PC-9 (cell line): ENCODE measurements at regions of chr9 and their contacts with region 1.

Region 1: GRCh38 chr9:94649100-94649819 is 9.9 kb upstream of the FBP1 start:
- DNase-seq: peak; percentile 68 to 100
- H3K4me3 ChIP-seq: peak overlapping the region; percentile 29; the same call in 1 of the 2 replicates
- H3K27ac ChIP-seq: peak overlapping the region; percentile 95
- H3K4me1 ChIP-seq: peaks cover 68% of the 10 kb centered on the region
- H3K27me3 ChIP-seq: no peaks in the 10 kb centered on the region
- CTCF ChIP-seq: no peak

Region 2: DNA sequence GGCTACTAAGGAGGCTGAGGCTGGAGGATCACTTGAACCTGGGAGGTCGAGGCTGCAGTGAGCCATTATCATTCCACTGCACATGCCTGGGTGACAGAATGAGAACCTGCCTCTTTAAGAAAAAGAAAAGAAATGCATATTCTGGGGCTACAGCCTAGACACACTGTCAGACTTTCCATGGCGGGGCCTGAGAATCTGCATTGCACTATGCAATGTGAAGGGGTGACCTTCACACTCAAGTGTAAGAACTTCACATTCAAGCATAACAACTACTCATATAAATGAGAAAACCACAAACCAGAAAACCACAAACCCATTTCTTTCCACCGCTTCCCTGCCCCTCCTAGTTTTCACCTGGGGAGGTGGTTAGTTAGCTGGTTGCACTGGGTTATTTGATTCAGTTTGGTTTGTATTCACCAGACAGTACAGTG is 37.6 kb before region 1 on chr9:
- CTCF ChIA-PET with region 1: no interaction called
- POLR2A ChIA-PET with region 1: no interaction called
- intact Hi-C with region 1: no loop called
- DNase-seq: no peak
- H3K4me3 ChIP-seq: no peak overlapping the region
- H3K27ac ChIP-seq: no peak overlapping the region
- H3K4me1 ChIP-seq: no peaks in the 10 kb centered on the region
- H3K27me3 ChIP-seq: no peaks in the 10 kb centered on the region
- CTCF ChIP-seq: no peak

Region 3: GRCh38 chr9:94630281-94631232 is 18.7 kb before region 1 on chr9:
- CTCF ChIA-PET with region 1: no interaction called
- POLR2A ChIA-PET with region 1: no interaction called
- intact Hi-C with region 1: loop called (anchors 2 kb)
- DNase-seq: peak; percentile 75 to 84
- H3K4me3 ChIP-seq: peak overlapping the region; percentile 15; the same call in 1 of the 2 replicates
- H3K27ac ChIP-seq: peak overlapping the region; percentile 64
- H3K4me1 ChIP-seq: peaks cover 40% of the 10 kb centered on the region
- H3K27me3 ChIP-seq: no peaks in the 10 kb centered on the region
- CTCF ChIP-seq: no peak; the same call in 1 of the 2 replicates

Region 4: GRCh38 chr9:94726495-94727191 is 77.4 kb after region 1 on chr9 and contains the start of gene AOPEP:
- CTCF ChIA-PET with region 1: no interaction called
- POLR2A ChIA-PET with region 1: interaction called, 12 read pairs
- intact Hi-C with region 1: loop called (anchors 10 kb)
- DNase-seq: peak; percentile 85 to 99
- H3K4me3 ChIP-seq: peak within 1 kb of the TSS; percentile 72
- H3K27ac ChIP-seq: peak within 1 kb of the TSS; percentile 69
- H3K4me1 ChIP-seq: peaks cover 16% of the 10 kb centered on the region
- H3K27me3 ChIP-seq: no peaks in the 10 kb centered on the region
- CTCF ChIP-seq: no peak
- total RNA-seq, gene AOPEP: 90.0 and 135 TPM in 2 replicates

Region 5: DNA sequence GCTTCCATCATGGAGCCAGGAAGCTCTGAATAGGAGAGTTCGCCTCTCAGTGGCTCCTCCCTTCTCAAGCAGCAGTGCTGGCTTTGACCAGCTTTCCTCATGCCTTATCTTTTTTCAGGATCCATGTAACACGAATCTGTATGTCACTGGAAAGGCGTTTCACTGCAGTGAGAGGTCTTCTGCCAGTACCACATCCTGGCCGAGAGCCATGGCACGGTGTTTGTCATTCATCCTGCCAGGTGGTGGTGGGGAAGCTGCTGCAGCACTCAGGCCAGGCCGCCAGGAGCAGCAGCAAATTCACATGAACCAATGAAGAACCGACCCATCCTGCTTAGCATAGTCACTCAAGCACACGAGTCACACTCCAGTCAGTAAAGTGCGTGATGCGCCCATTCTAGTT is 489.2 kb after region 1 on chr9:
- CTCF ChIA-PET with region 1: no interaction called
- POLR2A ChIA-PET with region 1: no interaction called
- intact Hi-C with region 1: no loop called
- DNase-seq: no peak
- H3K4me3 ChIP-seq: no peak overlapping the region
- H3K27ac ChIP-seq: no peak overlapping the region
- H3K4me1 ChIP-seq: no peaks in the 10 kb centered on the region
- H3K27me3 ChIP-seq: no peaks in the 10 kb centered on the region
- CTCF ChIP-seq: no peak